GM12878 (cell line): ENCODE measurements at regions of chr3 and their contacts with region 1.

Region 1: DNA sequence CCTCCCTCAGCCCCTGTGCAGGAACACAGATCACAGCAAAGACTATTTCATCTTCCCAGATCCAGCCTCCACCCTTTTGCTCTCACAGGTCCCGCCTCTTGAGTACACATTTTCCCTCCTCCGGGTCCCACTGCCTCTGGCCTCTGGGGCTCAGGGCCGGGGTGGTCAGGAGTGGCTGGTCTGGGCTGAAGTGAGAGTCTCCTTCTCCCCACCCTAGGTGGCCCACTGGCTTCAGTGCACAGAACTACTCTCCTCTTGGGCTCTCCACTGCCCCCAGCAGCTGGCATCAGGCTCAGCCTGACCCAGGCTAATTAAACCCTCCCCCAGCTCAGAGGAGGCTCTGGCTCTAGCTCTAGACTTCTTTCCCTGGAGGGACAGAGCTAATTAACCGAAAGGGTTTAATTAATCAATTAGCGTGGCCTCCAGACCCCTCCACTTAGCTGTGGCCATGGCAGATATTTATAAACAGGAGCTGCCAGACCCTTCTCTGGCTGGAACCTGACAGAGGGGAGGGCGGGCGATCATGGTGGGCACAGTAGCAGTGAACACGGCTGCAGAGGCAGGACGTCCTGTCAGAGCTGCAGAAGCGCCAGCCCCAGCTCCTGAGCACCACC is 15.1 kb downstream of the DUSP7 start:
- DNase-seq: no peak
- ATAC-seq: peak; percentile 62
- H3K4me3 ChIP-seq: no peak overlapping the region
- H3K27ac ChIP-seq: no peak overlapping the region
- H3K4me1 ChIP-seq: peaks cover 2% of the 10 kb centered on the region; the same call in 1 of the 2 replicates
- H3K27me3 ChIP-seq: no peaks in the 10 kb centered on the region
- CTCF ChIP-seq: peak in 2 of 3 experiments; percentile 34 to 38; a peak in 3 of 6 replicates
- EP300 ChIP-seq: no peak
- POLR2A ChIP-seq: no peak
- RAD21 ChIP-seq: no peak

Region 2: DNA sequence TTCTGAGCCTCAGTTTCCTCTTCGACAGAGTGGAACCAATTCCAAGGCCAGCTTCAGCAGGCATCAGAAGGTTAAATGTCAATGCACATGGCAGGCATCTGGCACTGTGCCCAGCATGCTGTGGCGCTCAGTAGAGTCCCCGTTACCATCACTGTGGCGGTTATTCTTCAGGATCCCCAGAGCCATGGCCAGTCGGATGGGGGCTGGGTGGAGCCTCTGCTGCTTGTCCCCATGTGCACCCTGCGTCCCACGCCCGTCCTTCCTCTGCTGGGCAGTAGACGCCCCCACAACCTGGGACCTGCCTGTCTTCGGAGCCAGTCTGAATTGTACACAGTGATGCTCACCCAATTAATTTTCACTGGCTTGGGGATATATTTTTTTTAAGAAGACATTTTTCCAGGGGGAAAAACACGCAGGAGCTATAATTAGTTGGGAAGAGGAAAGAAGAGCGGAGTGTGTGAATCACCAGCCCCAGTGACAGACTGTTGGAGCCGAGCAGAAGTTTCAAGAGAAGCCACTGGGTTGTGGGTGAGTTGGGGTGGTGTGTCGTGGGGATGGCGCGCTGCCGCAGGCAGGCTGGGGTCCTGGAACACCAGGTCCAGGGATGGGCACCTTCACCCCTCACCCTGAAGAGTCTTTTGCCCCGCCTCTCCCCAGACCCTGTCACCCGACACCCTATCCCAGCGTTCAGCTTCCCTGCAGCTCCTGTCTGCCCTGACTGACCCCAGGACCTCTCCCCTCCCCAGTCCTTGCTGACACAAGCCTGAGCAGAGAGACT is 18.7 kb before region 1 on chr3:
- CTCF ChIA-PET with region 1: interaction called, 8 read pairs
- POLR2A ChIA-PET with region 1: interaction called, 13 read pairs
- RAD21 ChIA-PET with region 1: interaction called, 42 read pairs
- SMC1A ChIA-PET with region 1: interaction called, 28 read pairs
- in situ Hi-C with region 1: no loop called
- intact Hi-C with region 1: no loop called
- DNase-seq: no peak
- ATAC-seq: no peak
- H3K4me3 ChIP-seq: no peak overlapping the region
- H3K27ac ChIP-seq: no peak overlapping the region
- H3K4me1 ChIP-seq: peaks cover 18% of the 10 kb centered on the region
- H3K27me3 ChIP-seq: no peaks in the 10 kb centered on the region
- CTCF ChIP-seq: no peak
- EP300 ChIP-seq: no peak
- POLR2A ChIP-seq: no peak
- RAD21 ChIP-seq: no peak